CD8-positive, alpha-beta T cell (primary cell): ENCODE measurements at regions of chr11 and their contacts with region 1.

Region 1: DNA sequence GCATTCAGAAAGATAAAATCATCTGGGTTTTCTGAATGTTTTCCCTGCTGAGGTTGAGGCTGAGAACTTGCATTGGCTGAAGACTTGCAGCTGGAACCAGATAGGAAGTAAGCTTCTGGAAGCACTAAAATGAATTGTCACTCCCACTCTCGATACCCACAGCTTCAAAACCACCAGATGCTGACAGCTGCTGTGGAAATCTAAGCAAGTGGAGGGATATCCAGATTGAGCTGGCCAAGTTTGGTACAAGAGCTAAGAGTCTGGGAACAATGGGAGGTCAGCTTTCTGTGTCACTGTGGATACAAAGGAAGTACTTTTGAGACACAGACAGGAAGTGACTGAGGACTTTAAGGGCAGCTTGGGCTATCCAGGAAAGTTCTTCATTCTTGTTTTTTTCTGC is 51.3 kb upstream of the CD44 start:
- DNase-seq: no peak
- ATAC-seq: no peak
- H3K4me3 ChIP-seq: no peak overlapping the region
- H3K4me3 Mint-ChIP-seq: no peak overlapping the region
- H3K27ac ChIP-seq: no peak overlapping the region
- H3K27ac Mint-ChIP-seq: no peak overlapping the region
- H3K4me1 ChIP-seq: peaks cover 43% of the 10 kb centered on the region
- H3K4me1 Mint-ChIP-seq: peaks cover 63% of the 10 kb centered on the region
- H3K27me3 ChIP-seq: no peaks in the 10 kb centered on the region
- H3K27me3 Mint-ChIP-seq: no peaks in the 10 kb centered on the region
- CTCF ChIP-seq: no peak

Region 2: DNA sequence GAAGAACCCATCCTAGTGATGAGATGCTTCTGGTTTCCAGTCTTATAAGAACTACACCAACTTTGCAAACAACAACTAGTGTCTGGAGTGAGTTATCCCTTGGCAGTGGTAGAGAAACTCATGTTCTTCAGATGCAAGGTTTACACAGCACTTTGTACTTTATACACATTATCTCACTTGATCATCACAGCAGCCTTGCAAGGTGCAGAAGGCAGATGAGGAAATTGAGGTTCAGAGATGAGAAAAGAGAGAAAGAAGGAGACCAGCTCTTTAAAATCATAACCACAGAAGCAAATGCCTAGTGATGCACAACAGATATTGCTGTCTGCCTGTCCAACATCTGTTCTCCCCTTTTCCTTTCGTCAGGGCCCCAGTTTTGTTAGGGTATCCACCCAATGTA is 34.7 kb after region 1 on chr11:
- CTCF ChIA-PET with region 1: no interaction called
- POLR2A ChIA-PET with region 1: no interaction called
- intact Hi-C with region 1: loop called (anchors 5 kb)
- DNase-seq: peak in 2 of 9 experiments; percentile 46 to 65
- ATAC-seq: peak; percentile 73
- H3K4me3 ChIP-seq: no peak overlapping the region
- H3K4me3 Mint-ChIP-seq: peak overlapping the region; percentile 3
- H3K27ac ChIP-seq: peak overlapping the region in 1 of 2 experiments; percentile 24
- H3K27ac Mint-ChIP-seq: peak overlapping the region; percentile 29
- H3K4me1 ChIP-seq: peaks cover 33% of the 10 kb centered on the region
- H3K4me1 Mint-ChIP-seq: peaks cover 53% of the 10 kb centered on the region
- H3K27me3 ChIP-seq: no peaks in the 10 kb centered on the region
- H3K27me3 Mint-ChIP-seq: no peaks in the 10 kb centered on the region
- CTCF ChIP-seq: no peak

Region 3: DNA sequence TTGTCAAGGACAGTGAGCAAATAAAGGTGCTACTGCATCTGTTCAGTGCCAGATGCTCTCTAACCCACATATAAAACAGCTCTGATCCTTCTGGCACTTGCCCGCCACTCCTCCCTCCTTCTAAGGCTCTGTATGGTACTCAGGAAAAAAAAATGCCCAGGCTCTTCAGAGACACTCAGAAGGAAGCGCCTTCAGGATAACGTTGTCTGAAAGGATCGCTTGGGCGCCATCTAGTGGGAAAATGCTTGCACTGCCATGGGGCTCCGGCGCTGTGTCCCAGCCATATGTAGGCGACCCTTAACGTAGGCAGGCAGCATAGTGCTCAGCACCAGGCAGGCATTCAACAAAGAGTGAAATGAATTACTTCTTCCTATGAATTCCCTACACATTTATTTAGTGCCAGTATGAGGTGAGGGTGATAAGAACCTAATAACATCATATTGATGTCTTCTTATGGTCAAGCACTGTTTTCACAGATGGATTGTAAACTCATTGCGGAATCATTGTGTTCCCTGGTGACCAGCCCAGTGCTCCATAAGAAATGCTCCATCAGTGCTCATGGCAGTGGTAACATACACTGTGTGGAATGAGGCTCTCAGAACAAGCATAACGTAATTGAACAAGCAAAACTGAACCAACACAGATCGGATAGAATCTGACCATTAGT is 398.1 kb after region 1 on chr11:
- CTCF ChIA-PET with region 1: no interaction called
- POLR2A ChIA-PET with region 1: no interaction called
- intact Hi-C with region 1: no loop called
- DNase-seq: peak; percentile 34 to 80 (median 69)
- ATAC-seq: peak; percentile 68
- H3K4me3 ChIP-seq: no peak overlapping the region
- H3K4me3 Mint-ChIP-seq: no peak overlapping the region
- H3K27ac ChIP-seq: no peak overlapping the region
- H3K27ac Mint-ChIP-seq: no peak overlapping the region
- H3K4me1 ChIP-seq: no peaks in the 10 kb centered on the region
- H3K4me1 Mint-ChIP-seq: no peaks in the 10 kb centered on the region
- H3K27me3 ChIP-seq: no peaks in the 10 kb centered on the region
- H3K27me3 Mint-ChIP-seq: peaks cover 51% of the 10 kb centered on the region
- CTCF ChIP-seq: peak; percentile 97